Activated CD4-positive, alpha-beta memory T cell treated with anti-CD3 and anti-CD28 coated beads for 36 hours (primary cell): ENCODE measurements at regions of chr6 and their contacts with region 1.

Region 1: GRCh38 chr6:155050311-155050710 is 55.2 kb downstream of the TIAM2 start:
- DNase-seq: peak; percentile 62
- H3K4me3 Mint-ChIP-seq: peak overlapping the region; percentile 14
- H3K27ac Mint-ChIP-seq: peak overlapping the region; percentile 85
- H3K4me1 Mint-ChIP-seq: peaks cover 25% of the 10 kb centered on the region
- H3K27me3 Mint-ChIP-seq: no peaks in the 10 kb centered on the region

Region 2: DNA sequence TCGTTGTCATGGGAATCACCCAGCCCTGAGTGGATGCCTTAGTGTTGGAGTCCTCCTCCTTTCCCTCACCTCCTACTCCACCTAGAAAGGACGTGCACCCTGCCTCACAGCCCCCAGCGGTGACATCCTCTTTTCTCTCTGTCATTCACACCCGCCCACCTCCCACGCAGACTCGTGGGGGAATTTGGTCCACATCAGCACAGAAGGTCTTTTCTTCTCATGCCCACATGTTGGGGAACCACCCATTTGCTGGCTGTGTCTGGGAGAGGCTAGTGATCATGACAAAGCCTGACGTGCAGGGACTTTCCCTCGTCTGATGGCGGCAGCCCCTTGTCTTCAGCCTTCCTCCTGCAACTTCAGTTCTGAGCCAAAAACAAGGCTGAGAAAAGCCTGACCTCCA is 443.9 kb before region 1 on chr6:
- CTCF ChIA-PET with region 1: no interaction called
- POLR2A ChIA-PET with region 1: no interaction called
- intact Hi-C with region 1: no loop called
- DNase-seq: peak; percentile 96
- H3K4me3 Mint-ChIP-seq: peak overlapping the region; percentile 24
- H3K27ac Mint-ChIP-seq: peak overlapping the region; percentile 67
- H3K4me1 Mint-ChIP-seq: peaks cover 43% of the 10 kb centered on the region
- H3K27me3 Mint-ChIP-seq: peaks cover 4% of the 10 kb centered on the region

Region 3: DNA sequence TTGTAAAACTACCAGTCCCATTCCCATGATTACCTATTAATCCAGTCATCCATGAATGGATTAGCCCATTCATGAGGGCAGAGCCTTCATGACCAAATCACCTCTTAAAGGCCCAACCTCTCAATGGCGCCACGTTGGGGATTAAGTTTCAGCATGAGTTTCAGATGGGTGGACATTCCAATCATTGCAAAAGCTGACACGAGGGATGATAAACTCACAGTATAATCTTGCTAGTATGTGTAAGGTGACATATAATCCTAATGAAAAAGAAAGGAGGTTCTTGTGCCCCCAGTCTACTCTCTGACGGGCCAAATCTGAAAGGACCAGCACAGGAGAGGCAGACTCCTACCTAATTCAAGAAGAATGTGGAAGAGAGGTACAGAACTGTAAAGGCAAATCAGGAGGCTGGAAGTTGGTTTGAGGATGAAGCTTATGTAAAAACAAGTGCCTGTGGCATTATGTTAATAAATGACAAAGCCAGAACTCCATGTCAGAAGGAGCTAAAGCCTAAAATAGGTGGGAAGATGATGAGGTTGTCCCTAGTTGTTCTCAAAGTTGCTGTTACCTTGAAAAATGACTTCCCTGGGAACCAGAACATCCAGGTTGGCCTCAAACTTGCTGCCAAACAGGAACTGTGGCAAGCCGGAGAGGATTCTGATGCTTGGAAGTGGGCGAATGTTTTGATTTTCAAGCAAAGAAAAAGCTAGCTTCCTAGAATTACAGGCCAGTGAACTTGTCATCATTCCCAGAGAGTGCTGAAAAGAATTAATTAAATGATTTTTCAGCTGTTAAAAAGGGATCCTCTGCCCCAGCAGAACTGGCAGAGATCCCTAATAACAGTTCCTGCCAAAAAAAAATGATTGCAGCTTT is 161.7 kb before region 1 on chr6:
- CTCF ChIA-PET with region 1: no interaction called
- POLR2A ChIA-PET with region 1: no interaction called
- intact Hi-C with region 1: no loop called
- DNase-seq: no peak
- H3K4me3 Mint-ChIP-seq: no peak overlapping the region
- H3K27ac Mint-ChIP-seq: no peak overlapping the region
- H3K4me1 Mint-ChIP-seq: peaks cover 5% of the 10 kb centered on the region
- H3K27me3 Mint-ChIP-seq: no peaks in the 10 kb centered on the region

Region 4: DNA sequence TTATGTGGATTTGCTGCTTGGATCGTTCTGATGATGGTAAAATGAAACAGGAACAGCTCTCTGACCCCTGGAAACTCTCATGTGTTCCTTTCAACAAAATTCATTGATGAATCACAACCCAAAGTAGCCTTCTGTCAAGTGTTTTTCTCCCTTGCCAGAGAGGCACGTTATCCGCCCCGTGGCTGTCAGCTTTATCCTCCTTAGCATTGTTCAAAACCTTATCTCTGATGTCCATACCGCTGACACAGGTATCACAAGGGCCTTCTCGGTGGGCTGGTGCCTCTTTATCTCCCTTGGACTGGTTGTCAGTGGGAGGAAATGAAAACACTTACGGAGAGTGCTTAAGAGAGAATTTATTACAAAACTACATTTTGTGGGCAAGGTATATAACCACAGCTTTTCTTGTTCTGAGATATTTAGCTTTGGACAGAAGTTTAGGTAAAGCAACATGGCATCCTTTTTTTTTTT is 29.7 kb after region 1 on chr6:
- CTCF ChIA-PET with region 1: no interaction called
- POLR2A ChIA-PET with region 1: interaction called, 5 read pairs
- intact Hi-C with region 1: loop called (anchors 2 kb)
- DNase-seq: peak; percentile 36
- H3K4me3 Mint-ChIP-seq: no peak overlapping the region
- H3K27ac Mint-ChIP-seq: peak overlapping the region; percentile 35
- H3K4me1 Mint-ChIP-seq: peaks cover 28% of the 10 kb centered on the region
- H3K27me3 Mint-ChIP-seq: no peaks in the 10 kb centered on the region

Region 5: GRCh38 chr6:155093430-155093829 is 43.1 kb after region 1 on chr6:
- CTCF ChIA-PET with region 1: no interaction called
- POLR2A ChIA-PET with region 1: no interaction called
- intact Hi-C with region 1: loop called (anchors 1 kb)
- DNase-seq: peak; percentile 58
- H3K4me3 Mint-ChIP-seq: no peak overlapping the region
- H3K27ac Mint-ChIP-seq: no peak overlapping the region
- H3K4me1 Mint-ChIP-seq: peaks cover 10% of the 10 kb centered on the region
- H3K27me3 Mint-ChIP-seq: no peaks in the 10 kb centered on the region

Region 6: DNA sequence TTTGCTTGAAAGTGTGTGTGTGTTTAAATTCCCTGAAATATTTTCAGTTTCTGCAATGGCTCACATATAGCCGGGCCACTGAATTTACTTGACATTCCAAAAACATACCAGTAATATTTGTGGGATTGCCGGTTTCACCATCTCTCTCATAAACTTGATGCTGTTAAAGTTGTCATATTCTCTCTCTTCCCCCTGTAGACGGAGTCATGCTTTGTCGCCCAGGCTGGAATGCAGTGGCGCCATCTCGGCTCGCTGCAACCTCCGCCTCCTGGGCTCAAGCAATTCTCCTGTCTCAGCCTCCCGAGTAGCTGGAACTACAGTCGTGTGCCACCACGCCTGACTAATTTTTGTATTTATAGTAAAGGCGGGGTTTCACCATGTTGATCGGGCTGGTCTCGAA is 67.0 kb after region 1 on chr6:
- CTCF ChIA-PET with region 1: no interaction called
- POLR2A ChIA-PET with region 1: no interaction called
- intact Hi-C with region 1: loop called (anchors 5 kb)
- DNase-seq: no peak
- H3K4me3 Mint-ChIP-seq: no peak overlapping the region
- H3K27ac Mint-ChIP-seq: peak overlapping the region; percentile 42
- H3K4me1 Mint-ChIP-seq: peaks cover 23% of the 10 kb centered on the region
- H3K27me3 Mint-ChIP-seq: peaks cover 2% of the 10 kb centered on the region

Region 7: GRCh38 chr6:155223646-155224451 is 173.5 kb after region 1 on chr6:
- CTCF ChIA-PET with region 1: no interaction called
- POLR2A ChIA-PET with region 1: no interaction called
- intact Hi-C with region 1: loop called (anchors 1 kb)
- DNase-seq: peak; percentile 78
- H3K4me3 Mint-ChIP-seq: peak overlapping the region; percentile 40
- H3K27ac Mint-ChIP-seq: peak overlapping the region; percentile 75
- H3K4me1 Mint-ChIP-seq: peaks cover 17% of the 10 kb centered on the region
- H3K27me3 Mint-ChIP-seq: peaks cover 6% of the 10 kb centered on the region

Region 8: DNA sequence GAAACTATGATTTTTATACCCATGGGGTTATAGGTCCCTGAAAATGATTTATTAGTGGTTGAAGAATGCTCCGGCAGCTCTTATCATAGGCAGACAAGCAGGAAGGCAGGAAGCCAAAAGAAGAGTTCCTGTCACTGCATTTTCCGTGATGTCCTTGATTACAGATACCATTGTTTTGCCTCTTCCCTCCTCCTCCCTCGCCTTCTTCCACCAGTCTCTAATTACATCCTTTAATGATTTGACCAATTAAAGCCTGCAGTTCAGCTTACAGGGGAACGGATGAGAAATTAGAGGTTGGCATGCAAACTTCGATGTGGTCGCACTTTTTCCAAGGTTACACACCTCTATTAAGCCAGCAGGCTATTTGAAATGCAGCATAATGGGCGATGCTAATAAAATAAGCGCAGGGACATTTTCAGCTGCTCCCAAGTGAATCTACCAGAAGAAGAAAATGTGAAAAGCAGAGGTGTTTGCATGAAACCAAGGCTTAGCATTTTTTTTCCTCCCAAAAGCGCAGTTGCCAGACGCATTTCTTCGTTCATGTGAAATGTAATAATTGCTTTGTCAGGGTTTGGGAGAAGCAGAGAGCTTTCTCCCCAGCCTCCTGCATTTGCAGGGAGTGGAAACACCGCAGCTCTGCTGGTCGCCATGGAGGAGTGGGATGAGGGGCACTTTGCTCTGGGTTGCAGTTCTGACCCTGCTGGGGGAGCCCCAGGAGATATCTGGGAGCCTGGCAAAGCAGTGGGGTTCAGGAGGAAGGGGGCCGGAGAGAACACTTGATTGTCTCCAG is 399.3 kb after region 1 on chr6:
- CTCF ChIA-PET with region 1: no interaction called
- POLR2A ChIA-PET with region 1: no interaction called
- intact Hi-C with region 1: no loop called
- DNase-seq: no peak
- H3K4me3 Mint-ChIP-seq: no peak overlapping the region
- H3K27ac Mint-ChIP-seq: no peak overlapping the region
- H3K4me1 Mint-ChIP-seq: peaks cover 8% of the 10 kb centered on the region
- H3K27me3 Mint-ChIP-seq: peaks cover 7% of the 10 kb centered on the region